ENCODE measurements at regions of chr1 and their contacts with region 1.

Region 1: GRCh38 chr1:168567007-168567406 is 9.4 kb upstream of the XCL1 start:
- DNase-seq: no peak
- ATAC-seq: no peak
- H3K4me3 Mint-ChIP-seq: no peak overlapping the region
- H3K27ac Mint-ChIP-seq: no peak overlapping the region
- H3K4me1 Mint-ChIP-seq: peaks cover 12% of the 10 kb centered on the region
- H3K27me3 Mint-ChIP-seq: no peaks in the 10 kb centered on the region
- CTCF ChIP-seq: no peak

Region 2: DNA sequence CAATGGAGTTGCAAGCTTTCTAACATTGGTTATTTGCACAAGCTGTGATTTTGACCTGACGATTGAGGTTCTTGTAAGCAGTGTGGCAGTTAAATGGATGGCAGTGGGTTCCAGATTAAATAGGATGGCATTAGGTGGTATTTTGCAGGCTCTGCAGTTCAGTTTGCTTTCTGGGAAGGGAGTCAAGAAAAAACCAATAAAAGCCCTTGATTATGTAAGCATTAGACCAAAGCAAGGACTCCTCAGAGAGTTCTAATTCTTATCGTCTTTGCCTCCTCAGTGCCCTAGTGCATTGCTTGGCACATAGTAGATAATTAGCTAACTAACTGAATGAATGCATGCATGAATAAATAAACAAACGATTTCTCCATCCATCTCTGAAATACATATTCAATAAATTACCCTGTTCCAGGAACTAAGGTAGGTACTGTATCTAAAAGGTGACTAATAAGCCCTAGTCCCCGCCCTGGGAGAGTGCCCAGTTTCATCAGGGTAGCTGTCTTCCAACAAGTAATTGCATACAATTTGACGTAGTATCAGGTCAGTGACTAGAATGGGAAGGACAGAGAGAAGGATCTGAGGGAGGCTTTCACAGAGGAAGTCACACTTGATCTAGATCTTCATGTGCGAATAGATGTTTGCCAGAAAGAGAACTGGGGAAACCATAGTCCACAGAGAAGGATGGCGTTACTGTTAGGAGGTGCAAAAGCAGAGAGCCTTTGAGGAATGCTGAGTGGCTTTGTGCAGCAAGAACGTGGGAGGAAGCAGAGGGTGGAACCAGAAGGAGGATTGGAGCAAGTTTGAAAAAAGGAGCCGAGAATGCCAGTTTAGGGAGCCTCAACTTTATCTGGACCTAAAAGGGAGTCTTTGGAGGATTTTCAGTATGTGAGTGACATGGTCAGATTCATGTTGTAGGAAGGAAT is 175.0 kb before region 1 on chr1:
- CTCF ChIA-PET with region 1: no interaction called
- POLR2A ChIA-PET with region 1: no interaction called
- intact Hi-C with region 1: no loop called
- DNase-seq: no peak
- ATAC-seq: no peak
- H3K4me3 Mint-ChIP-seq: no peak overlapping the region
- H3K27ac Mint-ChIP-seq: no peak overlapping the region
- H3K4me1 Mint-ChIP-seq: peaks cover 22% of the 10 kb centered on the region
- H3K27me3 Mint-ChIP-seq: peaks cover 7% of the 10 kb centered on the region
- CTCF ChIP-seq: no peak

Region 3: GRCh38 chr1:168553680-168554553 is 13.1 kb before region 1 on chr1:
- CTCF ChIA-PET with region 1: interaction called, 12 read pairs
- POLR2A ChIA-PET with region 1: no interaction called
- intact Hi-C with region 1: no loop called
- DNase-seq: peak; percentile 75
- ATAC-seq: peak; percentile 68
- H3K4me3 Mint-ChIP-seq: peak overlapping the region; percentile 46
- H3K27ac Mint-ChIP-seq: peak overlapping the region; percentile 93
- H3K4me1 Mint-ChIP-seq: peaks cover 63% of the 10 kb centered on the region
- H3K27me3 Mint-ChIP-seq: no peaks in the 10 kb centered on the region
- CTCF ChIP-seq: no peak

Region 4: DNA sequence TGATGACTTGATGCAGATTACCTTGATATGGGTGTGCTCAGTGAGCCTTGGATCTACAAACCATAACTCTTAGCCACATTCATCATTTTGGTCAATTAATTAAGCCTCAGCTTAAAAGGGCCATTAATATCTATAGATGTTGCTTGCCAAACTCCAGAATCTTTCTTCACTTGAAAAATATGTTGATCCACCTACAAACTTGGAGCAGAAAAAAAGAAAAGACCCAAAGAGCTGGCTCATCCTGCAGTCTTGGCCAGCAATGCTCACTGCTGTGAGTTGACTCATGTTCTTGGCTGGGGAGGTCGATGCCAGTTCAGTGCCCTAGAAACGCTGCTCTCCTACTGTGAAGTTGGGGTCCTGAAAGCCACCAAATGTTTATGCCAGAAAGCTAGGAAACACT is 86.6 kb after region 1 on chr1:
- CTCF ChIA-PET with region 1: no interaction called
- POLR2A ChIA-PET with region 1: no interaction called
- intact Hi-C with region 1: no loop called
- DNase-seq: no peak
- ATAC-seq: no peak
- H3K4me3 Mint-ChIP-seq: no peak overlapping the region
- H3K27ac Mint-ChIP-seq: no peak overlapping the region
- H3K4me1 Mint-ChIP-seq: no peaks in the 10 kb centered on the region
- H3K27me3 Mint-ChIP-seq: peaks cover 5% of the 10 kb centered on the region
- CTCF ChIP-seq: no peak

Measured in activated CD8-positive, alpha-beta T cell treated with anti-CD3 and anti-CD28 coated beads for 36 hours (primary cell).